Activated T-helper 1 cell treated with anti-CD3 and anti-CD28 coated beads, Interleukin-12 subunit alpha, Interleukin-12 subunit beta, Interleukin-2, Interleukin-4 antibody, amounts not matched to agents 30 ng/mL and 10 ng/mL and 1 ng/mL, durations not matched to agents 14 hours and 24 hours and 36 hours (primary cell): ENCODE measurements at regions of chr12 and their contacts with region 1.

Region 1: DNA sequence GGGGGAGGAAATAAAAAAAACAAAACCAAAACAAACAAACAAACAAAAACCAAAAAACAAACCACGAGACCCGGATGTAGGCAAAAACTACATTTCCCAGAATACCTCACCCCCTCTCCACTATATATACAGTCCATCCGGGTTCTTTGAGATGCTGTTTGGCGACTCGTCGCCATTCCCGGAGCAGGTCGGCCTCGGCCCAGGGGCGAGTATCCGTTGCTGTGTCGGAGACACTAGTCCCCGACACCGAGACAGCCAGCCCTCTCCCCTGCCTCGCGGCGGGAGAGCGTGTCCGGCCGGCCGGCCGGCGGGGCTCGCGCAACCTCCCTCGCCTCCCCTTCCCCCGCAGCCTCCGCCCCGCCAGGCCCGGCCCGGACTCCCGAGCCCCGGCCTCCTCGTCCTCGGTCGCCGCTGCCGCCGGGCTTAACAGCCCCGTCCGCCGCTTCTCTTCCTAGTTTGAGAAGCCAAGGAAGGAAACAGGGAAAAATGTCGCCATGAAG is at the start of gene RNF10:
- DNase-seq: peak; percentile 79
- H3K4me3 Mint-ChIP-seq: peak within 1 kb of the TSS; percentile 96
- H3K27ac Mint-ChIP-seq: peak within 1 kb of the TSS; percentile 94
- H3K4me1 Mint-ChIP-seq: peaks cover 53% of the 10 kb centered on the region
- H3K27me3 Mint-ChIP-seq: no peaks in the 10 kb centered on the region
- total RNA-seq, gene RNF10: 170 and 181 TPM in 2 replicates

Region 2: DNA sequence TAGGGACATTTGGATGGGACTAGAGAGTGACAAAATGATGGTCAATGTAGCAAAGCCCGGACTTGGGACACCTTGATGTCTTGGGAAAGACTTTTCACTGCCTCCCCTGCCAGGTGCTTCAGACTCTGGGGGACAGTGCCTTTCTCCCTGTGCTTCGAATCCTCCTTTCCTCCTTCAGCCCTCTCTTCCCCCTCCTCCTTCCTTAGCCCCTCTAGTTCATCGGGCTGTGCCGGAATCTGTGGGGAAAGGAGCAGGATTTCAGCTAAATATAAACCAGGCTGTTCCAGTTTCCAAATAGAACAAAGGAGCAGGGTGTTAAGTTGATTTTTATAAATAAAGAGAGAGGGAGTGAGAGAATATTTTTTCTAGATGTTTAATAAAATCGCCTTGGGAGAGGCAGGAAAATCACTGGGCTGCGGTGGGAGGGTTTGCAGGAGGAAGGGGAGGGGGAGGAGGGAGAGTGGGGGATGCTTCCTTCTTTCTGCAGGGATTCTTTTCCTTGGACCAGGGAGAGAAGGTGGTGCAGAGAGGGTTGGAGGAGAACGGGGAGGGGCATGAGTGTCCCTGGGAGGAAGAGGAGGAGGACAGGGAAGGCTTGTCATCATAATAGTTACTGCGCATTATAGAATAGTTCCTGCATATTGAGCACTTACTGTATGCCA is 84.8 kb after region 1 on chr12:
- intact Hi-C with region 1: no loop called
- DNase-seq: no peak
- H3K4me3 Mint-ChIP-seq: no peak overlapping the region
- H3K27ac Mint-ChIP-seq: no peak overlapping the region
- H3K4me1 Mint-ChIP-seq: peaks cover 6% of the 10 kb centered on the region
- H3K27me3 Mint-ChIP-seq: peaks cover 26% of the 10 kb centered on the region

Region 3: DNA sequence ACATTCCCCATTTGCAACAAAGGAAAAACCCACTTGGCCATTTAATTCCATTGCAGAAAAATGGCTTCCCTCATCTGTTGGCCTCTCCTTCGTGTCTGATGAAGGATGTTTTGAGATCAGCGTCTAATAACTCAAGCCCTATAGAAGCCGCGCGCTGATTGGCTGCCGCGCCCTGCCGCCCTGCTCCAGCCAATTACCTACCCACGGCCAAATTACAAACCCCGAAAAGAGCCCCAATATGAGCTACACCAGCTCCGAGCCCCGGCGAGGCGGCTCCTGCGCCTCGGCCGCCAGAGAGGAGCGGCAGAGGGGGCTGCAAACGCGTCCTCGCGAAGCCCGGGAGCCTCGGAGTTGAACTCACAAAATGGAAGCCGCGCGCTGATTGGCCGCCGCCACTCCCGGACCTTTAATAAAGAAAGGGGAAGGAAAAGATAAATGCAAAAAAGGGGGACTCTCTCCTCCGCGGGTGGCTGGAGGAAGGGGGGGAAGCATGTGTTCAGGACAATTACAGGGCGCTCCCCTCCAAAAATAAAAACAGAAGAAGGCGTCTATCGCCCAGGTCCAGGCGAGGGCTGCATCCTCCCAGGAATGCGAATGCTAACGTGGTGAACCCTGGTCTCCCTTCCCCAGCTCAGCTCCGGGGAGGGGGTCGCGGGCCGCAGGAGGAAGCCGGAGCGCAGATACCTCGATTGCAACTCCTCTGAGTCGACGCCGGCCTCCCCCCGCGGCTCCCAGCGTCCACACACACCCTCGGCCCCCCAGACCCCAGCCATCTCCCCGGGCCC is 1268.8 kb after region 1 on chr12:
- intact Hi-C with region 1: loop called (anchors 10 kb)
- DNase-seq: peak; percentile 83
- H3K4me3 Mint-ChIP-seq: peak overlapping the region; percentile 87
- H3K27ac Mint-ChIP-seq: peak overlapping the region; percentile 97
- H3K4me1 Mint-ChIP-seq: peaks cover 40% of the 10 kb centered on the region
- H3K27me3 Mint-ChIP-seq: peaks cover 2% of the 10 kb centered on the region